Common myeloid progenitor, CD34-positive (primary cell): ENCODE measurements at regions of chr7 and their contacts with region 1.

Region 1: GRCh38 chr7:128343554-128344430 is at the start of gene RBM28:
- DNase-seq: peak; percentile 94 to 97 (median 97)
- H3K4me3 ChIP-seq: peak within 1 kb of the TSS; percentile 47 to 96 (median 90)
- H3K27ac ChIP-seq: peak within 1 kb of the TSS; percentile 72 to 92
- H3K4me1 ChIP-seq: peaks cover 12 to 27% (median 17%) of the 10 kb centered on the region in 4 experiments
- H3K27me3 ChIP-seq: peaks cover 0 to 3% (median 1%) of the 10 kb centered on the region in 5 experiments

Region 2: DNA sequence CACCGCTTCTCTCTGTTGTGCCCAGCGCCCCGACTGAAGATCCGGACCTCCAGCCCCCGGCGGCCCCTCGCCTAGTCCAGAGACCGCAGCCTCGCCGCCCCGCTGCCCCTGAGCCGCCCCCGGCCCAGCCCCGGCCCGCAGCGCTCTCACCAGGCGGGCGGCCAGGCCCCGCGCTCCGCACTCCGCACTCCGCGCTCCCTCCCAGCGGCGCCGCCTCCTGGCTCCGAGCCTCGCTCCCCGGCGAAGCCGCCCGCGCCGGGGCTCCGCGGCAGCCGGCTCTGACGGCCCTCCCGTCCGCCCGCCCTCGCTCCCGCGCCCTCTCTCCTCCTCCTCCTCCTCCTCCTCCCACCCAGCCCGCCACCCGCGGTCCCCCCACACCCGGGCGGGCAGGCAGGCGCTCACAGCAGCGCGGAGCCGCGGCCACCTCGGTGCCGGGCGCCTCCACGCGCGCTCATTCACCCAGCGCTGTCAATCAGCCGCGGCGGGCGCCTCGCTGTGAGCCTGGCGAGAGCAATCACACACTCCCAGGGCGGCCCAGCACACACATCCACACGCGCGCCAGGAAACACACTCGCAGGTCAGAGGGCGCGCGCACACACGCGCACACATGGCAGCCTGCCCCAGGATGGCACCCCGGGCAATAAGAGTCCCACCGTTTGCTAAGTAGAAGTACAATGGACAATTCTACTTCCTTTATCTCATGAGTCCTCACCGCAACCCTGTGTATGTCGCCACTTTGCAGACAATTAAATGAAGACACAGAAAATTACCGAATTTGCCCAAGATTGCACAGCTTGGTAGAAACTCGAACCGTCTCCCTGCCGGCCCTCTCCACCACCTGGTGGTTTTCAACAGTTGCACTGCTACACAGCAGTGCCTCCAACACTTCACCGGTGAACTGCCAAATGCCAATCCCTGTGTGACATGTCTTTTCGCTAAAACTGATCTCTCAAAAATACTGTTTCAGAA is 17.9 kb after region 1 on chr7 and contains the start of gene PRRT4:
- CTCF ChIA-PET with region 1: interaction called, 16 read pairs
- POLR2A ChIA-PET with region 1: no interaction called
- DNase-seq: peak; percentile 34 to 71 (median 59)
- H3K4me3 ChIP-seq: peak within 1 kb of the TSS in 6 of 7 experiments; percentile 30 to 75 (median 63)
- H3K27ac ChIP-seq: no peak within 1 kb of the TSS
- H3K4me1 ChIP-seq: peaks cover 3 to 20% (median 19%) of the 10 kb centered on the region in 4 experiments
- H3K27me3 ChIP-seq: peaks cover 11 to 54% (median 25%) of the 10 kb centered on the region in 5 experiments

Region 3: DNA sequence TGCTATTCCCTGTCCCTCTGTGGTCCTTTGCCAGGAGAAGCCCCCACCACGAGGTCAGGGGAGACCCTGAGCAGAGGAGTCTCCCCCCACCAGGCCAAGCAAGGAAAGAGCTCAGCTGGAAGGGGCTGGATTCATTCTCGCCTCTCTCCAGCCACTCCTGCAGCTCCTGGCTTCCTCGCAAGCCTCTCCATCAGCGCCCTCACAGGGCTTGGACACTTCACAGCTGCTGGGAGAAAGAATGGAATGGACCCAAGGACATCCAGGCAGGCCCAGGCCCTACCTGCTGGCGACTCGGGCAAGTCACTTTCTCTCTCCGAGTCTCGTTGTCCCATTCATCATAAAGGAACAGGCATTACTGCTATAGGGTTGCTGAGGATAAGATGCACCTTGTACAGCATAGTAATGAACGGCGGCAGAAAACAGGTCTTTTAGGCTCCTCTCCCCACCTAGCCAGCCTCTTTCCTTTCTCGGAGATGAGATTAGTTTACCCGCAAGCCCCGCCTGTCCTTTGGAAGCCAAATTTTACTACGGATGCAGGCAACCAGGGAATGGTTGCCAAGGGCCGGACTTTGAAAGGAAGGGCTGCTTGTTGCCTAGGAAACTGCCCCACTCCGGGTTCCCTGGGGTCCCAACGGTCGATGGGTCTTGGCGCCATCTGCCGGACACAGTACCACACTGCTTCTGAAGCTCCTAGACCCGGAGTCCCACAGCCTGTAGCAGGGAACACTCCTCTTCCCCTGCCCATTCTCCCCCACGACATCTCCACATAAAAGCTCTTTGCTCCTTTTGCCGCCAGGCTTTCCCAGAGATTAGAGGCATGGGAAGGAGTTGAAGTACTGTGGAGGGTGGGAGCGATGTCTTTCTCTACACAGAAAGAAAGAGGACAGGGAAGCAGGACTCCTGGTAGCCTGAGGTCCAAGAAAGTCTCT is 43.7 kb after region 1 on chr7:
- CTCF ChIA-PET with region 1: interaction called, 440 read pairs
- POLR2A ChIA-PET with region 1: no interaction called
- DNase-seq: peak; percentile 63 to 74 (median 65)
- H3K4me3 ChIP-seq: no peak overlapping the region
- H3K27ac ChIP-seq: no peak overlapping the region
- H3K4me1 ChIP-seq: peaks cover 4 to 46% (median 37%) of the 10 kb centered on the region in 4 experiments
- H3K27me3 ChIP-seq: no peaks in the 10 kb centered on the region

Region 4: GRCh38 chr7:128409596-128410160 is 65.9 kb after region 1 on chr7 and contains the start of gene IMPDH1:
- CTCF ChIA-PET with region 1: interaction called, 13 read pairs
- POLR2A ChIA-PET with region 1: no interaction called
- DNase-seq: peak; percentile 53 to 79 (median 74)
- H3K4me3 ChIP-seq: peak within 1 kb of the TSS; percentile 73 to 91 (median 78)
- H3K27ac ChIP-seq: peak within 1 kb of the TSS in 1 of 2 experiments; percentile 57
- H3K4me1 ChIP-seq: peaks cover 9 to 52% (median 50%) of the 10 kb centered on the region in 4 experiments
- H3K27me3 ChIP-seq: no peaks in the 10 kb centered on the region

Region 5: DNA sequence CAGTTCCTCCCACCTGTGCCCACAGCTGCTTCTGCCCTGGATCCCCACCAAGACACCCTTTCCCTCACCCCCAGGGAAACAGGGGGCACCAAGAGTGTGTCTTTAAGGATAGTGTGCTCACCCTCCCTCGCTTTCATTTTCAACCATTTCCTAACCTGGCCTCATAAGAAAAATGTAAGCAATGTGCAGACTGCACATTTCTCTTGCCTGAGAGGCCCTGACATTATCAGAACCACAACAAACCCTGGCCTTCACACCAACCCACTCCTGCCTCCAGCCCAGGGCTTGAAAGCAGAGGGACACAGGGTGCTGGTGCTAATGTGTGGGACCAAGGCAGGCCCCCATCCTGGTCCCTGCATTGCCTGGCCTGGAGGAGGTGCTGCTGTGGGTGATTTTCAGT is 77.0 kb after region 1 on chr7:
- CTCF ChIA-PET with region 1: interaction called, 186 read pairs
- POLR2A ChIA-PET with region 1: no interaction called
- DNase-seq: no peak
- H3K4me3 ChIP-seq: no peak overlapping the region
- H3K27ac ChIP-seq: no peak overlapping the region
- H3K4me1 ChIP-seq: peaks cover 0 to 10% (median 0%) of the 10 kb centered on the region in 4 experiments
- H3K27me3 ChIP-seq: no peaks in the 10 kb centered on the region

Region 6: DNA sequence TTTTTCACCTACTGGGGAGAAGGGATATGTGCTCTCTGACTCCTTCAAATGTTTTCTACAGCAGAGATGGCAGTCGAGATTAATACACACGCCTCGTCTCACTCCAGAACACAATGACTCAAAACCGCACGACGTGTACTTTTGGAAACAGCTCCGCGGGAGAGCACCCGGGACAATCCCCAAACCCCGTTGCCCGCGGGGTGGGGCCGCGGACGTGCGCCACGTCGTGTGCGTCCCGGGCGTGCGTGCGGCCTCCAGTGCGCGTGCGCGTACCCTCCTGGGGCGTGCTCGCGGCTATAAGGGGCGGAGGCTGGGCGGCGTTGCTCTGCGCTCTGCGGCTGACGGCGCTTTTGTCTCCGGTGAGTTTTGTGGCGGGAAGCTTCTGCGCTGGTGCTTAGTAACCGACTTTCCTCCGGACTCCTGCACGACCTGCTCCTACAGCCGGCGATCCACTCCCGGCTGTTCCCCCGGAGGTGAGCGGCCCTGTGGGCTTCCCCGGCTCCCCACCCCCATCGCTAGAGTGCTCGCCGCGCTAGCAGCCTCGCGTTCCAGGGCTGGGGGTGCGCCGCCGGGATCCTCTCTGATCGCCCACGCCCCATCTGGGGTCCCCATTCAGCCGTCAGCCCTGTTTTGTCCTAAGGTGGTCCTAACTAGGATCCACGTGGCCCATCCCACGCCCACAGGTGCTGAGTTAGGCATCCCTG is 111.9 kb after region 1 on chr7 and contains the start of gene HILPDA:
- CTCF ChIA-PET with region 1: interaction called, 51 read pairs
- POLR2A ChIA-PET with region 1: no interaction called
- DNase-seq: peak; percentile 85 to 92 (median 92)
- H3K4me3 ChIP-seq: peak within 1 kb of the TSS; percentile 77 to 98 (median 88)
- H3K27ac ChIP-seq: peak within 1 kb of the TSS in 1 of 2 experiments; percentile 85
- H3K4me1 ChIP-seq: peaks cover 7 to 32% (median 21%) of the 10 kb centered on the region in 4 experiments
- H3K27me3 ChIP-seq: peaks cover 0 to 4% (median 0%) of the 10 kb centered on the region in 5 experiments